PC-3 (cell line): ENCODE measurements at regions of chr15 and their contacts with region 1.

Region 1: DNA sequence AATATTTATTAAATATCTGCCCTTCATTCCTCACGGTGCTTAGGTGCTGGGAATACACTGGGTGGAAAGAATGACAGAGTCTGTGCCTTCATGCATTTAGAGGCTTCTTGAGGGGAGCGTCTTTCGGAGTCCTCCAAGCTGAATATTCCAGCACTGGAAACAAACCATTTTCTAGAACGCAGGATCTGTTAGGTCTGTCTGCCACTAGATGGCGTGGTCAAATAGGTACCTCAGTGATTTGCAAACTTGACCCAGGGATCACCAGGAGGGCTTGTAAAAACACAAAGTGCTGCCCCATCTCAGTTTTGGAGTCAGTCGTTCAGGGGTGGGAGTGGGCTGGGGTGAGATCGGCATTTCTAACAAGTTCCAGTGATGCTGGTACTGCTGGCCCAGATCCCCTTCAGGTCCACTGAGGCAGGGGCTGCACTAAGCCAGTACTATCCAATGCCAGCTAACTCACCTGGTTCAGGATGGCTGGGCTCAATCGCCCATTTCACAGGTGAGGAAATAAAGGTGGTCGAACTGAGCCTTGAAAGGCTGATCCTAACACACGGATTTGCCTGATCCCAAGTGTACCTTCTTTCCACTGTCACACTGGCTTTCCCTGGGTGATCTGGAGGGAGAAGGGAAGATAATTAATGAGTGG is 14.8 kb downstream of the ARNT2 start:
- DNase-seq: peak; percentile 61
- ATAC-seq: peak; percentile 57
- H3K4me3 ChIP-seq: no peak overlapping the region
- H3K27ac ChIP-seq: no peak overlapping the region
- H3K4me1 ChIP-seq: peaks cover 11% of the 10 kb centered on the region
- H3K27me3 ChIP-seq: peaks cover 6% of the 10 kb centered on the region; the same call in 1 of the 2 replicates
- CTCF ChIP-seq: peak; percentile 78

Region 2: DNA sequence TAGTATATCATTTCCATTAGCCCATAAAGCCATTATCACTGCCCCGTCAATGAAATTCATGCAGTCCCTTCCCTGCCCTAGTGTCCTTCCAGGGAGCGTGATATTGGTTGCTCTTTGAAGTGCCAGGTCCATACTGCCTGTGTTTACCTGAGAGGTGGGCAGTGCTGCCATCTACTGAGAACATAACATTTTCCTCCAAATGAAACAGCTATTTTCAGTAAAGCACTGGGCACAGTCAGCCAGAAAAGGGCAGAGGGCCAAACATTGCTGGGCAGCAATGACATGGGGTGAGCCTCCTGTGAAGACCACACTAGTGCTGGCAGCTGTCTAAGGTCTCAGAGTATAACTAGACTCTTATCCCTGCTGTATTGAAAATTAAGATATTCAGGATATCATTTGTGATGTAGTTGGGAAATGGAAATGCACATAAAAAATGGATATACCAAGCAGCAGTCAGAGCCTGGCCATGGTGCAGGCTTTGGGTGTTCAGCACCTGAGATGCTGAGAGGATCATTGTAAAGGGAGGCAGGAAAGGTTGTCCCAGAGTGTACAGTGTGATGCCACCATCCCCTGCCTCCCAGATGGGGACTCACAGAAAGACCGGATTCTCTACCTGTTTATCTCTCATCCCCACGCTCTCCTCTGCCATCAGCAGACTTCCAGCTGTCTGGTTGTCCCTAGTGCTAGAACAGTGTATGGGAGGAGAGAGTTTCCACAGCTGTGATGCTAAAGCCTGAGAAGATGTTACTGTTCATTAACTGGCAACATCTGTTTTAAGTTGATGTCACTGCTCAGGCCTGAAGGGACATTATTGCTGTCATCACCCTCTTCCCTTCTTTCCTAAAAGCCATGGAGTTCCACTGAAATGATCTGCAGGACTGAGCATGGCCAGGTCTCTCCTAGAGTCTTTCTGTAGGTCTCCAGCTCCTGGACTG is 94.0 kb after region 1 on chr15:
- CTCF ChIA-PET with region 1: no interaction called
- POLR2A ChIA-PET with region 1: no interaction called
- intact Hi-C with region 1: loop called (anchors 2 kb)
- DNase-seq: peak; percentile 50
- ATAC-seq: peak; percentile 77
- H3K4me3 ChIP-seq: no peak overlapping the region
- H3K27ac ChIP-seq: no peak overlapping the region
- H3K4me1 ChIP-seq: no peaks in the 10 kb centered on the region
- H3K27me3 ChIP-seq: no peaks in the 10 kb centered on the region
- CTCF ChIP-seq: peak; percentile 59